ENCODE measurements at regions of chr6 and their contacts with region 1.

Region 1: GRCh38 chr6:116268589-116269293 is 11.0 kb downstream of the TSPYL1 start:
- DNase-seq: no peak
- H3K4me3 ChIP-seq: no peak overlapping the region
- H3K27ac ChIP-seq: no peak overlapping the region
- H3K4me1 ChIP-seq: no peaks in the 10 kb centered on the region
- H3K27me3 ChIP-seq: no peaks in the 10 kb centered on the region
- CTCF ChIP-seq: peak; percentile 18 to 71 (median 64)
- EP300 ChIP-seq: no peak
- POLR2A ChIP-seq: no peak

Region 2: DNA sequence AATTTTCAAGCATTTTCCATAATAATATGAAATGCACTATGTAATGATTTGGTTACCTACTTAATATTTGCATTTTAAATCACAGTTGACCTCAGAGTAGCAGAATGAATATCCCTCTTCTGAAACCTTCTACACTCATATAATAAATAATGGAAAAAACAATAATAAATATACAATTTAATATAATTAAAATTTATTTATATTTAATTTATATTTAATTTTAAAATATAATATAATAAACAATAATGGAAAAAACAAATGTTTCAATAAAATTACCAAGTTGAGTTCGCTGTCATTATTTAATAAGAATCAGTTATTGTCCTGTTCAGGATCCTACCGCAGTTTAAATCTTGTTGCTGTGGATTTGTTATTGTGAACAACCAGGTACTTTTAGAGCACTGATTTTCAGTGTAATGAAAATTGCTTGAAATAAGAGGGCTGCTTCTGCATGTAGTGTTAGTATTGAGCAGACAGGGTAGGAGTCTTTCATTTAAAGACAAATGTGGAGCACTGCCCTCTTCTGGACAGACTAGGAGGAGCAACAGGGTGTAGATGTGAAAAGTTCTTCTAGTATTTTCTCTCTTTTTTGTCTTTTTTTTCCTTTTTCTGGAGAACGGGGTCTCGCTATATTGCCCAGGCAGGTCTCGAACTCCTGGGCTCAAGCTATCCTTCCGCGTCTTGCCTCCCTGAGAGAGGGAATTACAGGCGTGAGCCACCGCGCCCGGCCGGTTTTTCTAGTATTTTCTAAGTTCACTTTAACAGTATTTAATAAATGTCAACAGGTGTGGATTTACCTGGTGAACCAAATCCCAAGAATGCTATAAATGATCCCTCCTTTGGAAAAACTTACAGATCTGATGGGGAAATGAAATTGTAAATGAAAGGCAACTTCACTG is 263.2 kb after region 1 on chr6:
- intact Hi-C with region 1: loop called in 2 of 4 experiments (anchors 10 kb)
- DNase-seq: peak; percentile 25 to 64 (median 36)
- H3K4me3 ChIP-seq: no peak overlapping the region
- H3K27ac ChIP-seq: no peak overlapping the region
- H3K4me1 ChIP-seq: peaks cover 2% of the 10 kb centered on the region
- H3K27me3 ChIP-seq: no peaks in the 10 kb centered on the region
- CTCF ChIP-seq: peak; percentile 23 to 71 (median 55)
- EP300 ChIP-seq: no peak
- POLR2A ChIP-seq: no peak

Region 3: GRCh38 chr6:117306227-117306785 is 1037.6 kb after region 1 on chr6:
- intact Hi-C with region 1: no loop called
- DNase-seq: no peak
- H3K4me3 ChIP-seq: no peak overlapping the region
- H3K27ac ChIP-seq: no peak overlapping the region
- H3K4me1 ChIP-seq: no peaks in the 10 kb centered on the region
- H3K27me3 ChIP-seq: no peaks in the 10 kb centered on the region
- CTCF ChIP-seq: no peak
- EP300 ChIP-seq: no peak
- POLR2A ChIP-seq: no peak

Measured in ovary (tissue), 10 donors.